ENCODE measurements at regions of chr17 and their contacts with region 1.

Region 1: GRCh38 chr17:76709077-76709950 is 1.5 kb downstream of the MXRA7 start:
- H3K4me3 ChIP-seq: peak overlapping the region; percentile 65
- H3K27ac ChIP-seq: peak overlapping the region; percentile 87
- H3K4me1 ChIP-seq: peaks cover 27% of the 10 kb centered on the region
- CTCF ChIP-seq: no peak

Region 2: DNA sequence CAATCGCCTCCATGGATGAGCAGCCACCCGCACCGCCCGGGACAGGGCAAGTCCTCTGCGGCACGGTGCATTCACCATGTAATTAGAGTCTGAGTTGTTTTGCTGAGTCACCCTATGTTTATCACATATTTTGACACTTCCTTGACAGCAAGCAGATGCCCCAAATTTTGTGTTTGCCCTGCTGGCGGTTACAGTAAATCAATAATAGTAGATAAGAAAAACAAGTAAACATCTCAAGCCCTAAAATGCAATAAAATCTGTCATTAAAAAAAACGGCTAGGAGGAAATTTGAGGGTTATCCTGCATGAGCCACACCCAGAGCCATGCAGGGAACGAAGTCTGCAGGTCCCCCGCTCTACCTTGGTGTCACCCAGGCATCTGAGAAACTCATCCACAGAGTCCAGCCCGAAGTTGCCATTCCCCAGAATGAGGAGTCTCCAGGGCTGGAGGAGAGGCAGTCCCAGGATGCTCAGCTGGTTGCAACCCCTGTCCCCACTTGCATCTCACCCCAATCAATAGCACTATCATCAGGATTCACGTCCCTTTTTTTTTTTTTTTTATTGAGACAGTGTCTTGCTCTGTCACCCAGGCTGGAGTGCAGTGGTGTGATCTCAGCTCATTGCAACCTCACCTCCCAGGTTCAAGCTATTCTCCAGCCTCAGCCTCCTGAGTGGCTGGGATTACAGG is 49.2 kb before region 1 on chr17:
- CTCF ChIA-PET with region 1: no interaction called
- POLR2A ChIA-PET with region 1: no interaction called
- H3K4me3 ChIP-seq: no peak overlapping the region
- H3K27ac ChIP-seq: peak overlapping the region; percentile 44; the same call in 1 of the 2 replicates
- H3K4me1 ChIP-seq: peaks cover 10% of the 10 kb centered on the region
- CTCF ChIP-seq: no peak

Region 3: GRCh38 chr17:76726231-76726775 is 17.0 kb after region 1 on chr17 and contains the start of gene JMJD6:
- CTCF ChIA-PET with region 1: interaction called, 68 read pairs
- POLR2A ChIA-PET with region 1: interaction called, 10 read pairs
- H3K4me3 ChIP-seq: peak within 1 kb of the TSS; percentile 93
- H3K27ac ChIP-seq: peak within 1 kb of the TSS; percentile 97
- H3K4me1 ChIP-seq: peaks cover 7% of the 10 kb centered on the region
- CTCF ChIP-seq: peak; percentile 7; the same call in 1 of the 2 replicates